ENCODE measurements at regions of chr3 and their contacts with region 1.

Region 1: DNA sequence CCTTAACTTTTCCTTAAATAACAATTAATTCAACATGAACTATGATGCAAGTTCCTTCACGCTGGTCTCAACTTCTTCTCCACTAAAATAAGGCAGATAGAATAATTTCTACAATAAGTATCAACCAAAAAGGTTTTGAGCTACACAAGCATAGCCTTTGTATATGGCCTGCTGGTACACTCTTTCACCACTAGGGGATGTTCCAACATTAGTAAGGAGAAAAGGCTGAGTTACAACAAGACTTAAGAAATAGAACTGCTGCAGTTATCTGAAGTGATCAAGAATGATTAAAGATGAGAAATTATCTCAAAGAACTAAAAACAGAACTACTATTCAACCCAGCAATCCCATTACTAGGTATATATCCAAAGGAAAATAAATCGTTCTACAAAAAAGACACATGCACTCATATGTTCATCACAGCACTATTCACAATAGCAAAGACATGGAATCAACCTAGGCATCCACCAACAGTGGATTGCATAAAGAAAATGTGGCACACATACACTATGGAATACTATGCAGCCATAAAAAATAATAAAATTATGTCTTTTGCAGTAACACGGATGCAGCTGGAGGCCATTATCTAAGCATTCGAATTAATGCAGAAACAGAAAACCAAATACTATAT is 14.4 kb downstream of the ATP13A3 start:
- DNase-seq: peak; percentile 41
- ATAC-seq: peak; percentile 90
- H3K4me3 Mint-ChIP-seq: no peak overlapping the region
- H3K27ac Mint-ChIP-seq: no peak overlapping the region
- H3K4me1 Mint-ChIP-seq: peaks cover 13% of the 10 kb centered on the region
- H3K27me3 Mint-ChIP-seq: no peaks in the 10 kb centered on the region

Region 2: GRCh38 chr3:194089357-194090177 is 382.8 kb before region 1 on chr3:
- CTCF ChIA-PET with region 1: no interaction called
- POLR2A ChIA-PET with region 1: no interaction called
- DNase-seq: no peak
- ATAC-seq: no peak
- H3K4me3 Mint-ChIP-seq: no peak overlapping the region
- H3K27ac Mint-ChIP-seq: no peak overlapping the region
- H3K4me1 Mint-ChIP-seq: peaks cover 4% of the 10 kb centered on the region
- H3K27me3 Mint-ChIP-seq: peaks cover 11% of the 10 kb centered on the region

Region 3: GRCh38 chr3:194395778-194396547 is 76.4 kb before region 1 on chr3:
- CTCF ChIA-PET with region 1: interaction called, 10 read pairs
- POLR2A ChIA-PET with region 1: no interaction called
- DNase-seq: peak; percentile 72
- ATAC-seq: peak; percentile 57
- H3K4me3 Mint-ChIP-seq: peak overlapping the region; percentile 44
- H3K27ac Mint-ChIP-seq: peak overlapping the region; percentile 54
- H3K4me1 Mint-ChIP-seq: peaks cover 50% of the 10 kb centered on the region
- H3K27me3 Mint-ChIP-seq: peaks cover 22% of the 10 kb centered on the region

Region 4: DNA sequence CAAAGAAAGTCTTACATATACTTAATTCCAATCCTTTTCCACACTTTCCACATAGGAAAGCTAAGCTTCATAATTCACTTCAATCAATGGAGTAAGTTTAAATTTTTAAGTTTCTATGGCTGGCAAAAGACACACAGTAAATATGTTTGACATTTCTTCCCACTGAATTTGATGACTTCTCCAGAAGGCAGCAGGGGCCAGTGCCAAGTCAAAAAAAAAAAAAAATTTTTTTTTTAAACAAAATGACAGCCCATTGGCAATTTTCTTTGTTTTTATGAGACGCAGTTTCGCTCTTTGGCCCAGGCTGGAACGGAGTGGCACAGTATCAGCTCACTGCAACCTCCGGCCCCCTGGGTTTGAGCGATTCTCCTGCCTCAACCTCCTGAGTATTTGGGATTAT is 14.3 kb before region 1 on chr3:
- CTCF ChIA-PET with region 1: interaction called, 19 read pairs
- POLR2A ChIA-PET with region 1: no interaction called
- DNase-seq: no peak
- ATAC-seq: no peak
- H3K4me3 Mint-ChIP-seq: no peak overlapping the region
- H3K27ac Mint-ChIP-seq: no peak overlapping the region
- H3K4me1 Mint-ChIP-seq: no peaks in the 10 kb centered on the region
- H3K27me3 Mint-ChIP-seq: no peaks in the 10 kb centered on the region

Region 5: DNA sequence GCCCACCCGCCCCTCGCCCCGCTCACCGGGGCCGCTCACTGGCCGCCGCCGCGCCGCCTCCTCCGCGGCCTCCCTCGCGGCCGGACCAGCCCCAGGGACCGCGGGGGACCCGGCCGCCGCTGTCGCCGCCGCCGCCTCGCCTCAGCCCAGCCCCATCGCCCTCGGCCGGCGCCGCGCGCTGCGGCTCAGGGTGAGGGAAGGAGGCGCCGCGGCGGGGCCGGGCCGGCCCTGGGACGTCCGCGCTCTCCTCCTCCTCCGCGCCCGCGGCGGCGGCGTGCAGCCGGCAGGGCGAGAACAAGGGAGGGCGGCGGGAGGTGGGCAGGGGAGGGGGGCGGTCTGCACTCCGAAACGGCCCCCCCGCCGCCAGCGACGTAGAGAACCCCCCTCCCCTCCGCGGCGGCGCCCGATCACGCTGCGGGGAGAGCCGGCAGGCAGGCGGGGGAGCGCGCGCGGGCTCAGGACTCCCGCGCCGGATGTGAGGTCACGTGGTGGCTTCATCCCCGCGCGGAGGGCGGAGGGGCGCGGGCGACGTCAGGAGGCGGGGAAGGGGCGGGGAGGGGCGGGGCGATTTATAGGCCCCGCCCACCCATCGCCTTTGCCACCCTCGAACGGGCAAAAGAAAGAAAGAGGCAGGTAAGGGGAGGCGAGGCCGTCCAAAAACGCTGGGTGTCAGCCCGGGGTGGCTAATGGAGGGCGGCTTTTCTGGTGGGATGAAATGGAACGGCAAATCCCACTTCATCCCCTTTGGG is 14.3 kb after region 1 on chr3 and contains the start of gene ATP13A3:
- CTCF ChIA-PET with region 1: interaction called, 39 read pairs
- POLR2A ChIA-PET with region 1: interaction called, 4 read pairs
- DNase-seq: peak; percentile 90
- ATAC-seq: peak; percentile 88
- H3K4me3 Mint-ChIP-seq: peak within 1 kb of the TSS; percentile 89
- H3K27ac Mint-ChIP-seq: peak within 1 kb of the TSS; percentile 93
- H3K4me1 Mint-ChIP-seq: peaks cover 41% of the 10 kb centered on the region
- H3K27me3 Mint-ChIP-seq: no peaks in the 10 kb centered on the region
- total RNA-seq, gene ATP13A3: 63.9 to 66.8 TPM

Region 6: DNA sequence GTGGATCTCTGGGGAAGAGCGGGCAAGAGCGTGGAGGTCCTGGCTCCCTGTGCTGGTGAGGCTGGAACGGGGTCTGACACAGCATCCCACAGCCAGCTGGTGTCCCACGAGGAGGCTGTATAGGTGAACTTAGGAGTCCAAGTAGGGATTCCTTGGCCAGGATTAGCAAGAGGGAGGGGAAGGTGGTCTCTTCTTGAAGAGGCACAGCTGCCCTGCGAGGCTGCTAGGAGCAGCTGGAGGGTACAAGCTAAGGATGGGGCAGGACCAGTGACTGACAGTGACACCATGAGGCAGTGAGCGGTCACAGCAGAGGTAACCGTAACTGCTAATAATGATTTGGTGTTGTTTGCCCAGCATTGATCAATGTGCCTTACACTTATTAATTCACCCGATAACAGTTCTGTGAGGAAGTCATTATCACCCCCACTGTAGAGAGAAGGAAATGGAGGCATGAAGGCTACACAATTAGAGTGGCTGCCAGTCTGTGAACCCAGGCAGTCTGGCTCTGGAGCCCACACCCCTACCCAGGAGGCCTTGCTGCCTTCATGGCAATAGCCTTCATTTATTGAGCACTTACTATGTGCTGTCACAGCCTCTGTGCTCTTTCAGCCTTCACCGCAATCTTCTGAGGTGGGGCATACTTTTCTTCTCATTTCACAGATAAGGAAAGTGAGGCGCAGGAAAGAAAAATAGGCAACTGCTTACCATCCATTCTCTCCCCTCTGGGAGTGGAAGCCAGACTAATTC is 101.5 kb after region 1 on chr3:
- CTCF ChIA-PET with region 1: interaction called, 62 read pairs
- POLR2A ChIA-PET with region 1: no interaction called
- DNase-seq: peak; percentile 46
- ATAC-seq: peak; percentile 87
- H3K4me3 Mint-ChIP-seq: no peak overlapping the region
- H3K27ac Mint-ChIP-seq: no peak overlapping the region
- H3K4me1 Mint-ChIP-seq: peaks cover 2% of the 10 kb centered on the region
- H3K27me3 Mint-ChIP-seq: peaks cover 30% of the 10 kb centered on the region

Region 7: DNA sequence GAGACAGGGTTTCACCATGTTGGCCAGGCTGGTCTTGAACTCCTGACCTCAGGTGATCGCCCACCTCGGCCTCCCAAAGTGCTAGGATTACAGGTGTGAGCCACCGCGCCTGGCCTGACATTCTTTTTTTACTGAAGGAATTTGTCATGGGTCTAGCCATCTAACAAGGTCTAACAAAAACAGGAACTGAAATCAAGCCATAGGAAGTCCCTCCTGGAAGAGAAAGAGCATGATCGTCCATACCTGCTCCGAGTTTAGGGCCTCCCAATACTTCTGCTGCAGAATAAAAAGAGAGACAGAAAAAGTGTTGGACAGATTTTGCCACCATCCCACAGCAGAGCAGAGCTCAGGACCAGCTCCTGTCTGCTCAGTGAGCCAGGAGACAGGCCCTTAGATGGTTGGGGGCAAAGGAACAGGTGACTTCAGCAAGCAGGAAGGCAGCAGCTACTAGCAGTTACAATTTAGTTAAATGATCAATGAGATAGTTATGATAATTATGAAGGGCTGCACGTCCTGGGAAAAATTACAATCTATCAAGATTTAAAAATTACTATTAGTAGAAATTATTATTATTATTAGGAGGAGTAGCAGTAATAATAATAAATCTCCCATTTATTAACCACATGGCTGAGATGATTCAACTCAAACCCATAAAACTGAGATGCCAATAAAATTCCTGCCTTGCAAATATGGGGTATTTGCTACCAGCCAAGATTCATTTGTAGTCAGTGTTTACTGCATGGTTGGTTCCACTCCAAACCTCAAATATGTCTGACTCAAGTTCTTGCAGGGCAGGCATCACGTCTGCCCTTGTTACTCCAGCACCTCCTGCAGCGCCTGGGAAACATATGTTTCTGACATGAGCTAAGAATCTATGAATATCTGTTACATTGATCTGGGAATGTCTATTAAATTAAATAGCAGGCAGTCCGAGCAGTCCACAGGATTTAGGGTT is 120.7 kb after region 1 on chr3:
- CTCF ChIA-PET with region 1: interaction called, 62 read pairs
- POLR2A ChIA-PET with region 1: no interaction called
- DNase-seq: no peak
- ATAC-seq: no peak
- H3K4me3 Mint-ChIP-seq: no peak overlapping the region
- H3K27ac Mint-ChIP-seq: no peak overlapping the region
- H3K4me1 Mint-ChIP-seq: peaks cover 5% of the 10 kb centered on the region
- H3K27me3 Mint-ChIP-seq: no peaks in the 10 kb centered on the region

Measured in activated CD8-positive, alpha-beta T cell treated with anti-CD3 and anti-CD28 coated beads, Interleukin-2, amount 10 ng/mL, durations not matched to agents 7 days and 5 days (primary cell).